ENCODE measurements at regions of chr5 and their contacts with region 1.

Region 1: GRCh38 chr5:6448622-6449464 is at the start of gene UBE2QL1:
- DNase-seq: no peak
- total RNA-seq, gene UBE2QL1: 3.3 to 5.8 TPM

Region 2: GRCh38 chr5:5492087-5492933 is 956.5 kb before region 1 on chr5:
- intact Hi-C with region 1: loop called in 1 of 2 experiments (anchors 10 kb)
- DNase-seq: no peak

Region 3: GRCh38 chr5:5505815-5506214 is 943.0 kb before region 1 on chr5:
- intact Hi-C with region 1: loop called in 1 of 2 experiments (anchors 2 kb)
- DNase-seq: no peak

Region 4: GRCh38 chr5:6510132-6510531 is 61.3 kb after region 1 on chr5:
- intact Hi-C with region 1: no loop called
- DNase-seq: no peak

Region 5: GRCh38 chr5:8098081-8098480 is 1649.2 kb after region 1 on chr5:
- intact Hi-C with region 1: no loop called
- DNase-seq: no peak

Measured in posterior vena cava (tissue), 2 donors.